Naive thymus-derived CD8-positive, alpha-beta T cell (primary cell): ENCODE measurements at regions of chr4 and their contacts with region 1.

Region 1: DNA sequence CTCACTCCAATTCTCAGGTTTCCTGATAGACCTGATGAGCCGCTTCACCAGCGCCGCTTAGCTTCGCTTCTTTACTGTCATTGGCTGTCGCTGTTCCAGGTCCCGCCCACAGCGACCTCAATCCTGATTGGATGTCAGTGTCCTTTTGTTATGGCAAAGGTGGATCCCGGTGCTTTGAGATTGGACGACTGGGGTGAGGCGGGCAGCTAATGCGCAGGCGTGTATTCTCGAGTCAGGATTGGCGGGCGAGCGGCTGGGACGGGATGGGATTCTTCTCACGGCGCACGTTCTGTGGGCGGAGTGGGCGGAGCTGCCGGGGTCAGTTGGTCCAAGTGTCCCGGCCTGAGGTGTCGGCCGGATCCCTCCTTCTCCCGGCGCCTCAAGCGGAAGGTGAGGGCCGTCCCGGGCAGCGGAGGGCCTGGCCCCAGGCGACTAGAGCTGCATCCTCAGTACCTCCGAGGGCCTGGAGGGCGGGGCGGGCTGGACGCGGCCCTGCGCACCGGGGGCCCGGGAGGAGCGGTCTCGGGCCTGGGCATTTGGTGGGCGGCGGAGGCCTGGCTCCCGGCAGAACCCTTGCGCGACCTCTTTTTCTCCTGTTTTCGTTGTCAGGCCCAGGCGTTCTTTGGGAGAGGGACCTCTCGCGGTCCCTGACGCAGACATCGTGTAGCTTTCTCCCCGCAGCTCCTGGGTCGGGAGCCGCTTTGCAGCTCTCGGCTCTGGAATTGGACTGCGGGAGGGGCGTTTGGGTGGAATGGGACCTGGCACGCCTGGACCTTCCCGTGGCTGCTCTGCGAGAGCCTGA is at the start of gene SCOC:
- DNase-seq: peak; percentile 86 to 99 (median 96)
- ATAC-seq: peak; percentile 94 to 95
- H3K4me3 Mint-ChIP-seq: peak within 1 kb of the TSS in 2 of 10 donors; percentile 88 to 89
- H3K27ac Mint-ChIP-seq: peak within 1 kb of the TSS in 7 of 10 donors; percentile 29 to 91 (median 85)
- H3K4me1 Mint-ChIP-seq: peaks cover 12 to 48% (median 37%) of the 10 kb centered on the region in 4 donors
- H3K27me3 Mint-ChIP-seq: peaks cover 0 to 3% (median 0%) of the 10 kb centered on the region in 5 donors
- polyA plus RNA-seq, gene SCOC: 38.2 to 50.9 (median 38.2) TPM

Region 2: DNA sequence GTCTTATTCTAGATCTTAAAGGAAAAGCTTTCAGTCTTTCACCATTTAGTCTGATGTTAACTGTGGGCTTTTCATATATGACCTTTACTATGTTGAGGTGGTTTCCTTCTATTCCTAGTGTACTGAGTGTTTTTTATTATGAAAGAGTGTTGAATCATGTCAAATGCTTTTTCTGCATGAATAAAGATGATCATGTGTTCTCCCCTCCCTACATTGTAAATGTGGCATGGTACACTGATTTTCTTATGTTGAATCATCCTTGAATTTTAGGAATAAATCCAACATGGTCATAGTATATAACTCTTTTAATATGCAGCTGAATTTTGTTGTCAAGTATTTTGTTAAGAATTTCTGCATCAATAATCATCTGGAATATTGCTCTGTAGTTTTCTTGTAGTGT is 49.6 kb after region 1 on chr4:
- POLR2A ChIA-PET with region 1: no interaction called
- DNase-seq: no peak
- ATAC-seq: no peak
- H3K4me3 Mint-ChIP-seq: no peak overlapping the region
- H3K27ac Mint-ChIP-seq: no peak overlapping the region
- H3K4me1 Mint-ChIP-seq: peaks cover 3 to 12% (median 8%) of the 10 kb centered on the region in 4 donors
- H3K27me3 Mint-ChIP-seq: peaks cover 17 to 51% (median 33%) of the 10 kb centered on the region in 5 donors

Region 3: GRCh38 chr4:140523857-140524742 is 150.6 kb after region 1 on chr4 and contains the start of gene ELMOD2:
- POLR2A ChIA-PET with region 1: interaction called, 28 read pairs
- DNase-seq: peak; percentile 94 to 99 (median 97)
- ATAC-seq: peak; percentile 98
- H3K4me3 Mint-ChIP-seq: peak within 1 kb of the TSS; percentile 83 to 93 (median 86)
- H3K27ac Mint-ChIP-seq: peak within 1 kb of the TSS; percentile 18 to 94 (median 90)
- H3K4me1 Mint-ChIP-seq: peaks cover 7 to 36% (median 28%) of the 10 kb centered on the region in 4 donors
- H3K27me3 Mint-ChIP-seq: no peaks in the 10 kb centered on the region
- polyA plus RNA-seq, gene ELMOD2: 5.2 to 9.1 (median 5.8) TPM